ENCODE measurements at regions of chr3 and their contacts with region 1.

Region 1: GRCh38 chr3:17258823-17259436 is 374.2 kb downstream of the PLCL2 start:
- DNase-seq: no peak
- ATAC-seq: no peak

Region 2: DNA sequence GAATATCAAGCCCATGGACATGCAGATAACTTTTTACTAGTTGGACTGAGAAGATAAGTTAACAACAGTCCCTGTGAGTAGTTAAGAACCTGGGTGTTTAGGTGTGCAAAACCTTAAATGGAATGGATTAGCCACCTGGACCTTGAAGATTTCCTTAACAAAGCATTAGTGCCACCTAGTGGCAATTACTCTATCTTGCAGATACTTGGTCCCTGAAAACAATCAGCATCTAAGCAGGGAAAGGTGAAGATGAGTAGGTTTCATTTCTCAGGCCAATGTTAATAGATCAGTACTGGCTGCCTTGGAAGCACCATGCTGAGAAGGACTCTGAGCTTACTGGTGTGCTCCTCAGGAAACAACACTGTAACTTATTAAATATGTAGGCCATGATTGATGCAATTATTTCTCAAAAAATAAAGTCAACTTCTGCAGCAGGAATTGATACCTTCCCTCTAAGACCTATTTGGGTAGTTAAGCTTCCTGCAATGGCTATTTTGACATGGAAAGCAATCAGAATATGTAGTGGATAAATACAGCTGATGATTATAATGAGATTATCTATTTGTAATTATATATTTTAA is 154.1 kb after region 1 on chr3:
- intact Hi-C with region 1: loop called (anchors 2 to 5 kb)
- DNase-seq: no peak
- ATAC-seq: peak in 1 of 2 donors; percentile 60

Region 3: DNA sequence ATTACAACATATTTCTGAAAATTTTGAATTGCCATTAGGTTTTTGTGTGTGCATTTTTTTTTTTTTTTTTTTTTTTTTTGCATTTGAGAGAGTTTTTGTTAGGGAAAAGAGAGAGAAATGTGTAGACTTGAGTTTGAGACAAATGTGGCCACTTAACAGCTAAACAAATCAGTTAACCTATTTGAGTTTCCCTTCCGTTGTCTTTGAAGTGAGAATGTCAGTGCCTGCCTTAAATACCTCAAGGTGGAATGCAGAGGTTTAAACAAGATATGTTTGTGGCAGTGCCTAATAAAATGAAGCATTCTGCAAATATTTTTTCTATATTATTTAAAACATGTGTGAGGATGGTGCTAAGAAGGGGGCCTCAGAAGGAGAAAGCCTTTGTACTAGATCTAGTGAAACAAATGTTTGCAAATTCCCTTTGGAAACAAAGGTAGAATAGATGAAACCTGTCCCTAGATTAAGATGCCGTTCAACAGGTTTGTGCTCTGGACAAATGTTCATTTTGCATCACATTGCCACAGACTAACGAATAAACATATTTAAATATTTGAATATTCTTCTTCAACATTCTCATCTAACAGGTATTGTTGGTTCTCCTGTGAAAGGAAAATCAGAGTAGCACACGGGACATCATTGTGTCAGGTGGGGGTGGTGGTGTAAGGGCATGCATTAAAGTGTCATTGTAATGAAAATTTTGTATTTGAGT is 1085.5 kb after region 1 on chr3:
- intact Hi-C with region 1: no loop called
- DNase-seq: no peak
- ATAC-seq: no peak